HEK293 (cell line): ENCODE measurements at regions of chr5 and their contacts with region 1.

Region 1: DNA sequence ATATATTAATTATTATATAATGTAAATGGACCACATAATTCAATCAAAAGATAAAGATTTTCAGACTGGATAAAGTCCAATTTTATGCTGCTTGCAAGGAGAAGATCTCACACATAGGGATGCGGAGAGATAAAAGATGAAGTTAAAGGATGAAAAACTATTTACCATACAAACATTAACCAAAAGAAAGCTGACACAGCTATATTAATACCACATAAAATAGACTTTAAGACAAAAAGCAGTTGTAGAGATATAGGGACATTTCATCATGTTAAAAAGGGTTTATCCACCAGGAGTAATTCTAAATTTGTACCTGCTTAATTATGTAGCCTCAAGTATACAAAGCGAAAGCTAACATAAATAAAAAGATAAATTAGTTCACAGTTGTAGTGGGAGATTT is 15.2 kb upstream of the NSG2 start:
- H3K4me3 ChIP-seq: no peak overlapping the region
- H3K27ac ChIP-seq: no peak overlapping the region
- H3K4me1 ChIP-seq: no peaks in the 10 kb centered on the region
- CTCF ChIP-seq: no peak

Region 2: DNA sequence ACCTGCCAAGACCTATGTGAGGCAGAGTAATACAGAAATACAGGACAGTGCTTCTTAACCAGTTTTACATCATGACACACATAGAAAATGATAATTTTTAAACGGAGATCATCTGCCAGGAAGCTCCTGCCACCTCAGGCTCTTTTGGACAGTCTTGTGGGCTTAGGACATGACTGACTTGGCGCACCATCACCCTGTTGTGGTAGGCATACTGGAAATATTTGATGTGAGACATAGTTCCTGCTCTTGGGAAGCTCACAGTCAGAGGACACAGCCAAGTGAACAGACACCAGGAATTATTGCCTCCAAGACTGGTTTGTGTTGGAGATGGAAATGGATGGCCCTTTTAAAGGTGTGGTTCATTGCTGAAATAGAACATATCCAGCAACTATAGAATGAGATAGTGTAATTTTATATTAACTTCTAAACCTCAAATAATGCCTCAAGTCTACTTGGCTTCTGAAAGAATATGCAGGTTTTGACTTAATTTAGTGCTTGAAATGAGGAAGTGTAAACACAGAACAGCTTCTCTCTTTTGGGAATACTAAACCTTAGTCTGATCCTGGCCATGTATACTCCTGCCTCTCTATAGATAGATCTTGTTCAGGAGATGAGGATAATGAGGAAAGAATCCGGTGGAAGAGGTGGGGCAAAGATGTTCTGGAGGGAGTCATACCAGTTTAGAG is 122.5 kb before region 1 on chr5:
- CTCF ChIA-PET with region 1: no interaction called
- POLR2A ChIA-PET with region 1: no interaction called
- H3K4me3 ChIP-seq: no peak overlapping the region
- H3K27ac ChIP-seq: no peak overlapping the region
- H3K4me1 ChIP-seq: peaks cover 17% of the 10 kb centered on the region; the same call in 1 of the 2 replicates
- CTCF ChIP-seq: no peak

Region 3: DNA sequence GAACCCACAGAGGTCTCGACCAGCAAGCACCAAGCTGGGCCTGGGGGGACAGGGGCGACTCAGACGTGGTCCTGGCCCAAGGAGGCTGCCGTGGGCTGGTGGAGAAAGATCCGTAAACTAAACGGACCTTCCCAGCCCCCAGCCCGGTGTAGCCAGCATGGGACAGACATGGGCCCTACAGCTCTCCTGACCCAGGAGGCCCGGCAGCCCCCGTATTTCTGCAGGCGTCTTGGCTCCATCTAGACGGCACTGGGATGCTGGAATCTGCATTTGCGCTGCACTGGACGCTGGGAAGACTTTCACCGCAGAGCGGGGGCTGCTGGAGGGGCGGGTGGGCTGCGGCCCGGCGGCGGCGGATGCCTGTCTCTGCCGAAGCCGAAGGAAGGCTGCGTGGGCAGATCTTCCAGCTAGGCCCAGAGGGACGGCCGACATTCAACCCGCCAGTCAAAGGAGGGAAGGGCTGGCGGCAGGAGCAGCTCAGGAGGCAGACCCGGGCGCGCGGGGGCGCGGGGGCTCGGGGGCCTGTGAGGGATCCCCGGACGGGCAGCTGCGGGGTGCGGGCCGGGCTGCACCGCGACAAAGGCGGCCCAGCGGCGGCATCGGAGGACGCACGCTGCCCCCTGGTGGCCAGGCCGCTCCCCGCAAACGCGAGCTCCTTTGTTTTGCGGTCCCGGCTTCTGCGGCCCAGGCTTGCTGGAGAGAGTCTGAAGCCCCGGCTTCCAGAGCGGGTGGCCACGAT is 281.4 kb after region 1 on chr5:
- CTCF ChIA-PET with region 1: interaction called, 11 read pairs
- POLR2A ChIA-PET with region 1: no interaction called
- H3K4me3 ChIP-seq: peak overlapping the region; percentile 39
- H3K27ac ChIP-seq: no peak overlapping the region
- H3K4me1 ChIP-seq: no peaks in the 10 kb centered on the region
- CTCF ChIP-seq: peak; percentile 84